Naive thymus-derived CD4-positive, alpha-beta T cell (primary cell): ENCODE measurements at regions of chr6 and their contacts with region 1.

Region 1: GRCh38 chr6:31619805-31620585 is 520 bp upstream of the PRRC2A start:
- DNase-seq: peak; percentile 81 to 97 (median 94)
- ATAC-seq: peak; percentile 88
- H3K4me3 ChIP-seq: peak overlapping the region; percentile 90
- H3K4me3 Mint-ChIP-seq: peak overlapping the region; percentile 87 to 97 (median 93)
- H3K27ac ChIP-seq: peak overlapping the region; percentile 96
- H3K27ac Mint-ChIP-seq: peak overlapping the region; percentile 95 to 99 (median 96)
- H3K4me1 ChIP-seq: peaks cover 14 to 23% of the 10 kb centered on the region in 2 donors
- H3K4me1 Mint-ChIP-seq: peaks cover 26 to 60% (median 53%) of the 10 kb centered on the region in 7 donors
- H3K27me3 ChIP-seq: no peaks in the 10 kb centered on the region
- H3K27me3 Mint-ChIP-seq: no peaks in the 10 kb centered on the region

Region 2: GRCh38 chr6:31356946-31357466 is 263.0 kb before region 1 on chr6 and contains the start of gene HLA-B:
- CTCF ChIA-PET with region 1: no interaction called
- POLR2A ChIA-PET with region 1: no interaction called
- intact Hi-C with region 1: no loop called
- DNase-seq: peak; percentile 65 to 91 (median 82)
- ATAC-seq: peak; percentile 90
- H3K4me3 ChIP-seq: peak within 1 kb of the TSS; percentile 68
- H3K4me3 Mint-ChIP-seq: peak within 1 kb of the TSS; percentile 80 to 100 (median 98)
- H3K27ac ChIP-seq: peak within 1 kb of the TSS; percentile 100
- H3K27ac Mint-ChIP-seq: peak within 1 kb of the TSS; percentile 99 to 100 (median 100)
- H3K4me1 ChIP-seq: peaks cover 28 to 33% of the 10 kb centered on the region in 2 donors
- H3K4me1 Mint-ChIP-seq: peaks cover 49 to 66% (median 58%) of the 10 kb centered on the region in 7 donors
- H3K27me3 ChIP-seq: no peaks in the 10 kb centered on the region
- H3K27me3 Mint-ChIP-seq: peaks cover 0 to 19% (median 0%) of the 10 kb centered on the region in 5 donors
- total RNA-seq, gene HLA-B: 5,136 to 7,364 (median 5,516) TPM

Region 3: GRCh38 chr6:31541658-31542521 is 78.1 kb before region 1 on chr6 and contains the start of gene DDX39B:
- CTCF ChIA-PET with region 1: interaction called, 3 read pairs
- POLR2A ChIA-PET with region 1: interaction called, 3,078 read pairs
- intact Hi-C with region 1: loop called (anchors 1 kb)
- DNase-seq: peak; percentile 80 to 97 (median 94)
- ATAC-seq: peak; percentile 83
- H3K4me3 ChIP-seq: peak within 1 kb of the TSS; percentile 77
- H3K4me3 Mint-ChIP-seq: peak within 1 kb of the TSS; percentile 84 to 99 (median 98)
- H3K27ac ChIP-seq: peak within 1 kb of the TSS; percentile 97
- H3K27ac Mint-ChIP-seq: peak within 1 kb of the TSS; percentile 90 to 100 (median 100)
- H3K4me1 ChIP-seq: peaks cover 34 to 45% of the 10 kb centered on the region in 2 donors
- H3K4me1 Mint-ChIP-seq: peaks cover 34 to 65% (median 55%) of the 10 kb centered on the region in 7 donors
- H3K27me3 ChIP-seq: no peaks in the 10 kb centered on the region
- H3K27me3 Mint-ChIP-seq: no peaks in the 10 kb centered on the region
- total RNA-seq, gene DDX39B: 443 to 761 (median 546) TPM

Region 4: DNA sequence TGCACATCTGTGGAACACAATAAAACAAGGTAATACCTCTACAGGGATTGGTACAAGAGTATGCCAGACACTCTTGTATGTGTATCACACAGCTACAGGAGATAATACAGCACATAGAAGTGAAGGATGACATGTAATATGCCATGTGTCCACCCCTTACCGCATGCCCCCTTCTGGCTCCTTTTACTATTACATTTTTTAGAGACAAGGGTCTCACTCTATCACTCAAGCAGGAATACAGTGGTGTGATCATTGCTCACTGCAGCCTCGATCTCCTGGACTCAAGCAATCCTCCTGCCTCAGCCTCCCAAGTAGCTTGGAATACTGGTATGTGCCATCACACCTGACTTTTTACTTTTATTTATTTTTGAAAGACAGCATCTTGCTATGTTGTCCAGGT is 23.0 kb before region 1 on chr6:
- CTCF ChIA-PET with region 1: interaction called, 26 read pairs
- POLR2A ChIA-PET with region 1: interaction called, 26 read pairs
- intact Hi-C with region 1: loop called in 1 of 2 experiments (anchors 1 kb)
- DNase-seq: peak in 7 of 9 donors; percentile 68 to 83 (median 79)
- ATAC-seq: peak; percentile 89
- H3K4me3 ChIP-seq: no peak overlapping the region
- H3K4me3 Mint-ChIP-seq: peak overlapping the region in 9 of 10 donors; percentile 38 to 68 (median 55)
- H3K27ac ChIP-seq: peak overlapping the region; percentile 47
- H3K27ac Mint-ChIP-seq: peak overlapping the region; percentile 52 to 95 (median 81)
- H3K4me1 ChIP-seq: peaks cover 34 to 44% of the 10 kb centered on the region in 2 donors
- H3K4me1 Mint-ChIP-seq: peaks cover 34 to 60% (median 55%) of the 10 kb centered on the region in 7 donors
- H3K27me3 ChIP-seq: no peaks in the 10 kb centered on the region
- H3K27me3 Mint-ChIP-seq: no peaks in the 10 kb centered on the region

Region 5: GRCh38 chr6:31702819-31703522 is 83.0 kb after region 1 on chr6 and contains the start of gene ABHD16A:
- CTCF ChIA-PET with region 1: no interaction called
- POLR2A ChIA-PET with region 1: no interaction called
- intact Hi-C with region 1: loop called (anchors 1 kb)
- DNase-seq: peak; percentile 93 to 97 (median 96)
- ATAC-seq: peak; percentile 95
- H3K4me3 ChIP-seq: peak within 1 kb of the TSS; percentile 98
- H3K4me3 Mint-ChIP-seq: peak within 1 kb of the TSS; percentile 92 to 100 (median 98)
- H3K27ac ChIP-seq: peak within 1 kb of the TSS; percentile 98
- H3K27ac Mint-ChIP-seq: peak within 1 kb of the TSS; percentile 95 to 98 (median 97)
- H3K4me1 ChIP-seq: peaks cover 21 to 28% of the 10 kb centered on the region in 2 donors
- H3K4me1 Mint-ChIP-seq: peaks cover 16 to 39% (median 31%) of the 10 kb centered on the region in 7 donors
- H3K27me3 ChIP-seq: no peaks in the 10 kb centered on the region
- H3K27me3 Mint-ChIP-seq: peaks cover 0 to 2% (median 0%) of the 10 kb centered on the region in 5 donors
- total RNA-seq, gene ABHD16A: 60.1 to 71.7 (median 65.2) TPM

Region 6: DNA sequence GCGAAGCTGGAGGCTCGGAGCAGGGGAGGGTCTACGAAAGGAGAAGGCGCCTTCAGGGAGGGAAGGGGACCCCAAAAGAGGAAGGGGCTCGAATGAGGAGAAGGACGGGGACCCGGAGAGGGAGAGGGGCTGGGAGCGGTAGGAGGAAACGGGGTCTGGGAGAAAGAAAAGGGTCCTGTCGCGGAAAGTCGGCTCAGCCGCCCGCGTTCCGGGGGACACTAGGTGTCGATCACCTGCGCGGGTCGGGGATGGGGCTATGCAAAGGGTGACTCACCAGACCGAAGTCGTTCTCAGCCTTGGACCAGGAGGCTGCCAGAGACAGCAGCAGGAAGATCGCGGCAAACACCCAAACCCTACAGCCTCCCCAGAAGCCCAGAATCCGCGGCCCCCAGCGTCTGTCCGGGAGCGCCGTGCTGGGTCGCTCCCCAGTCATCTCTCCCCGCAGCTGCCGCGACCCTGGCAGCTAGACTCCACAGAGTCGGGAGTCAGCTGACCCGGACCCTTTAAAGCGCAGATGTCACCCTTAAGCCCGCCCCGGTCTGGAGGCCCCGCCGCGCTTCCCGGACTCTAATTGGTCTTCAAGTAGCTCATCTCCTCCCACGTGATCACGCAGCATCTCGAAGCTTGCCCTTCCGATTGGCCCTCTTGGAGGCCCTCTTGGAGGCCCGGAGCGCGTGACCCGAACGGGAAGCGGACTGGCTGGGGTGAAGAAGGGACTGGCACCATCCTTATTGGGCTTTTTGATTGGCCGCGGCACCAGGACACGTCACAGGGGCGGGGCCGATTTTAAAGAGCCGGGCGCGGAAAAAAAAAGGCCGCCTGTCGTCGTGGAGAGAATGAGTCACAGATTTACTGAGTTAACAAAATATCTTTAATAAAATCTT is 242.6 kb after region 1 on chr6 and contains the start of gene NEU1:
- CTCF ChIA-PET with region 1: no interaction called
- POLR2A ChIA-PET with region 1: no interaction called
- intact Hi-C with region 1: loop called in 1 of 2 experiments (anchors 1 kb)
- DNase-seq: peak; percentile 87 to 100 (median 99)
- ATAC-seq: peak; percentile 97
- H3K4me3 ChIP-seq: peak within 1 kb of the TSS; percentile 97
- H3K4me3 Mint-ChIP-seq: peak within 1 kb of the TSS; percentile 87 to 96 (median 93)
- H3K27ac ChIP-seq: peak within 1 kb of the TSS; percentile 86
- H3K27ac Mint-ChIP-seq: peak within 1 kb of the TSS; percentile 85 to 97 (median 93)
- H3K4me1 ChIP-seq: peaks cover 8 to 15% of the 10 kb centered on the region in 2 donors
- H3K4me1 Mint-ChIP-seq: peaks cover 14 to 29% (median 20%) of the 10 kb centered on the region in 7 donors
- H3K27me3 ChIP-seq: no peaks in the 10 kb centered on the region
- H3K27me3 Mint-ChIP-seq: peaks cover 0 to 2% (median 0%) of the 10 kb centered on the region in 5 donors
- total RNA-seq, gene NEU1: 18.6 to 35.0 (median 20.1) TPM